GM12878 (cell line): ENCODE measurements at regions of chr10 and their contacts with region 1.

Region 1: DNA sequence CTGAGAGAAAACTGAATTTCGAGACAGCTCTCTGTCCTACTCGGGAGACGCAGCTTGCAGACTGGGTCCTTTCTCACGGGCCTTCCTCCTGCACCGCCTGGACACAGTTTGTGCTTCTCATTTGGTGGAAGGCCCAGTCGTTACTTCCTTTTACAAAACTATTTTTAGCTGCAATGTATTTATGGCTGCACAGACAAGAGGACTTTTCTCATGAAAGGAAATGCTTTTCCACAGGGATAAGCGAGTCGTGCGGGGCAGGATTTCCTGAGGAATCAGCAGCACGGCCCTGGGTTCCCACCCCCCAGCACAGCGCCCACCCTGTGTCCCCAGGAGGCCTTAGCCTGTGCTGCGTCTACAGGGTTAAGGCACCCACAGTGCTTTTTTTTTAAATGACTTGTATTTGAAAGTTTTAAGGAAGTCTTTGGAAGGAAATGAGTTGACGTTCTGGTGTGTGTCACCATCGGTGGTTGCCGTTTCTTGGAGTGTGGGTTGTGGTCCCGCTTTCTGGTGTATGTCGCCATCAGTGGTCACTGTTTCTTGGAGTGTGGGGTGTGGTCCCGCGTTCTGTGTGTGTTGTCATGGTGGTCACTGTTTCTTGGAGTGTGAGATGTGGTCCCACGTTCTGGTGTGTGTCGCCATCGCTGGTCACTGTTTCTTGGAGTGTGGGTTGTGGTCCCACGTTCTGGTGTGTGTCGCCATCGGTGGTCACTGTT is 50.9 kb downstream of the INPP5A start:
- DNase-seq: no peak
- ATAC-seq: peak; percentile 73
- H3K4me3 ChIP-seq: peak overlapping the region; percentile 28; the same call in 1 of the 2 replicates
- H3K27ac ChIP-seq: peak overlapping the region; percentile 9
- H3K4me1 ChIP-seq: peaks cover 19% of the 10 kb centered on the region
- H3K27me3 ChIP-seq: no peaks in the 10 kb centered on the region
- CTCF ChIP-seq: no peak
- EP300 ChIP-seq: no peak
- POLR2A ChIP-seq: no peak
- RAD21 ChIP-seq: no peak

Region 2: GRCh38 chr10:132563843-132564521 is 24.5 kb before region 1 on chr10:
- CTCF ChIA-PET with region 1: no interaction called
- POLR2A ChIA-PET with region 1: no interaction called
- RAD21 ChIA-PET with region 1: interaction called, 9 read pairs
- SMC1A ChIA-PET with region 1: interaction called, 16 read pairs
- in situ Hi-C with region 1: no loop called
- intact Hi-C with region 1: no loop called
- DNase-seq: peak; percentile 76
- ATAC-seq: peak; percentile 94
- H3K4me3 ChIP-seq: peak overlapping the region; percentile 40; the same call in 1 of the 2 replicates
- H3K27ac ChIP-seq: no peak overlapping the region
- H3K4me1 ChIP-seq: peaks cover 40% of the 10 kb centered on the region
- H3K27me3 ChIP-seq: no peaks in the 10 kb centered on the region
- CTCF ChIP-seq: peak in 1 of 3 experiments; percentile 22; a peak in 1 of 6 replicates
- EP300 ChIP-seq: peak; percentile 64 to 90; a peak in 2 of 4 replicates
- POLR2A ChIP-seq: no peak
- RAD21 ChIP-seq: no peak